PC-3 (cell line): ENCODE measurements at regions of chr13 and their contacts with region 1.

Region 1: GRCh38 chr13:89951341-89951740 is 1396.1 kb upstream of the MIR17HG start:
- DNase-seq: no peak
- ATAC-seq: no peak
- H3K4me3 ChIP-seq: no peak overlapping the region
- H3K27ac ChIP-seq: no peak overlapping the region
- H3K4me1 ChIP-seq: no peaks in the 10 kb centered on the region
- H3K27me3 ChIP-seq: no peaks in the 10 kb centered on the region
- CTCF ChIP-seq: no peak

Region 2: DNA sequence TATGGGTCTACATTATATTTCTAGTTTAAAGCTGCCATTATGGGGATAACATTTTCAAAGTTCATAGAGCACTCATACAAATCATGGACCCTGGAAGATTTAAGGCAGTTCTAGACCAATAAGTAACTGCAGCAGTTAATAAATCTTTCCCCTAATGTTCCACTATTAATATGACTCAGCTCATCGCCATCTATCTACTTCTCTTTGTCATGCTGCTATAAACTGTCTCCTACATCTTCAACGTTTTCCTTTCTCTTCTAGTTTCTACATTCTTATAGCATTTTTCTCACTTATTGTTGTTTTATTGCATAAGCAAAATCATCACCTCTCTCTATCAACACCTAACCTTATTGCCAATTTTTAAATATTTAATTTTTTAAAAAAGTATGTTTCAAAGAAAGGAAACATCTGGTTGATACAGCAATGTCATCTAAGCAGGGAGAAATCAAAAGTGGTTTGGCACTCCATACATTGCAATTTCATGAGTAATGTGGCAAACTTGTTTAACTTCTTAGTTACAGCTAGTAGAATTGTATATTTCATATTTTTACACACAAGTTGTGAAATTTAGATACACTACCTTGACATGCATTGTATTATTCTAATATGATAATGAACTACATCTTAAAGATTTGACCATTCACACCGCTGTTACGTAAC is 104.3 kb before region 1 on chr13:
- CTCF ChIA-PET with region 1: no interaction called
- POLR2A ChIA-PET with region 1: no interaction called
- intact Hi-C with region 1: no loop called
- DNase-seq: peak; percentile 50
- ATAC-seq: peak; percentile 65
- H3K4me3 ChIP-seq: no peak overlapping the region
- H3K27ac ChIP-seq: no peak overlapping the region
- H3K4me1 ChIP-seq: peaks cover 7% of the 10 kb centered on the region; the same call in 1 of the 2 replicates
- H3K27me3 ChIP-seq: no peaks in the 10 kb centered on the region
- CTCF ChIP-seq: no peak

Region 3: GRCh38 chr13:90055121-90055520 is 103.8 kb after region 1 on chr13:
- CTCF ChIA-PET with region 1: no interaction called
- POLR2A ChIA-PET with region 1: no interaction called
- intact Hi-C with region 1: loop called (anchors 10 kb)
- DNase-seq: peak; percentile 79
- ATAC-seq: peak; percentile 95
- H3K4me3 ChIP-seq: no peak overlapping the region
- H3K27ac ChIP-seq: no peak overlapping the region
- H3K4me1 ChIP-seq: peaks cover 9% of the 10 kb centered on the region; the same call in 1 of the 2 replicates
- H3K27me3 ChIP-seq: no peaks in the 10 kb centered on the region
- CTCF ChIP-seq: no peak

Region 4: GRCh38 chr13:90365130-90365529 is 413.8 kb after region 1 on chr13:
- CTCF ChIA-PET with region 1: no interaction called
- POLR2A ChIA-PET with region 1: no interaction called
- intact Hi-C with region 1: loop called (anchors 10 kb)
- DNase-seq: no peak
- ATAC-seq: peak; percentile 33; the same call in 1 of the 2 replicates
- H3K4me3 ChIP-seq: no peak overlapping the region
- H3K27ac ChIP-seq: no peak overlapping the region
- H3K4me1 ChIP-seq: no peaks in the 10 kb centered on the region
- H3K27me3 ChIP-seq: no peaks in the 10 kb centered on the region
- CTCF ChIP-seq: peak; percentile 40; the same call in 1 of the 2 replicates